A673 (cell line): ENCODE measurements at regions of chr1 and their contacts with region 1.

Region 1: GRCh38 chr1:16093596-16093995 is 20.1 kb upstream of the FAM131C start:
- DNase-seq: no peak
- H3K4me3 ChIP-seq: no peak overlapping the region
- H3K27ac ChIP-seq: no peak overlapping the region
- H3K4me1 ChIP-seq: peaks cover 9% of the 10 kb centered on the region
- H3K27me3 ChIP-seq: no peaks in the 10 kb centered on the region
- CTCF ChIP-seq: no peak

Region 2: GRCh38 chr1:15409388-15410222 is 684.0 kb before region 1 on chr1 and contains the start of gene EFHD2:
- CTCF ChIA-PET with region 1: no interaction called
- POLR2A ChIA-PET with region 1: no interaction called
- intact Hi-C with region 1: no loop called
- DNase-seq: peak; percentile 93
- H3K4me3 ChIP-seq: peak within 1 kb of the TSS; percentile 96
- H3K27ac ChIP-seq: peak within 1 kb of the TSS; percentile 78
- H3K4me1 ChIP-seq: peaks cover 13% of the 10 kb centered on the region
- H3K27me3 ChIP-seq: no peaks in the 10 kb centered on the region
- CTCF ChIP-seq: no peak
- total RNA-seq, gene EFHD2: 30.6 and 32.5 TPM in 2 replicates

Region 3: DNA sequence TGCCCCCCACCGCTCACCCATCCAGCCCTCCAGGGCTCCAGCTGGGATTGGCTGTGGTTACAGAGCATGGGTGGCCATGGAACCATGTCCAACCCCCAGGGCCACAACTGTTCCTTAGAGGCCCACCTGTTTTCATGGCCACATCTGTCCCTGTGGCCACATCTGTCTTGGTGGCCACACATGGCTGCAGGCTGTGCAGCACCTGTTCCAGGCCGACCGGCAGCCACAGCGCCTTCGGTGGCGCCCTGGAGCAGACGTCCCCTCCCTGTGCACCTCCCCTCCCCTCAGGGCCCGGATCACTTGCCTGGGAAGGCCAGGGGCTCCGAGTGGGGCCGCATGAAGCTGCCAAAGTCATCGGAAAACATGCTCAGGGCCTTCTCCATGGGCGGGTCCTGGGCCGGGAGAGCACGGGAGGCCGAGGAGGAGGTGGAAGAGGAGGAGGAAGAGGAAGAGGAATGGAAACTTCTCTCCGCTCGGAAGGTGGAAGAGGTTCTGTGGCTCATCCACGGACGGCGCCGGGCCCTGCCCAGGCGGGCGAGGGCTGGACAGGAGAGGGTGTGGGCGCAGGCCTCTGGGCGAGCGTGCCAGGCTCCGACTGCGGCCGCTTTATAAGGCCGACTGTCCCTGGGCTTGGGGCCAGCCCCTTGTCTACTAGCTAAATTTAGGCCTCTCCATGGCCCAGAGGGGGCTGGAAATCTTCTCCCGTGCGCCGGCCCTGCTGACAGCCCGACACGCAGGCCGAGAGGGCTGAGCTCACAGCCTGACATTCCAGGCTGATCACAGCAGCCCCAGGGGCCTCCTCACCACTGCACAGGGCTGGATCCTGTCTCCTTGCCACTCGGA is 75.9 kb before region 1 on chr1 and contains the start of gene HSPB7:
- CTCF ChIA-PET with region 1: no interaction called
- POLR2A ChIA-PET with region 1: no interaction called
- intact Hi-C with region 1: no loop called
- DNase-seq: no peak
- H3K4me3 ChIP-seq: no peak within 1 kb of the TSS
- H3K27ac ChIP-seq: no peak within 1 kb of the TSS
- H3K4me1 ChIP-seq: peaks cover 7% of the 10 kb centered on the region
- H3K27me3 ChIP-seq: no peaks in the 10 kb centered on the region
- CTCF ChIP-seq: no peak
- total RNA-seq, gene HSPB7: not detected in 2 replicates

Region 4: GRCh38 chr1:16155532-16156410 is 62.2 kb after region 1 on chr1 and contains the start of gene EPHA2:
- CTCF ChIA-PET with region 1: interaction called, 10 read pairs
- POLR2A ChIA-PET with region 1: no interaction called
- intact Hi-C with region 1: no loop called
- DNase-seq: peak; percentile 95
- H3K4me3 ChIP-seq: peak within 1 kb of the TSS; percentile 93
- H3K27ac ChIP-seq: peak within 1 kb of the TSS; percentile 95
- H3K4me1 ChIP-seq: peaks cover 44% of the 10 kb centered on the region
- H3K27me3 ChIP-seq: no peaks in the 10 kb centered on the region
- CTCF ChIP-seq: no peak
- total RNA-seq, gene EPHA2: 70.5 and 91.6 TPM in 2 replicates

Region 5: GRCh38 chr1:16187748-16188401 is 94.3 kb after region 1 on chr1:
- CTCF ChIA-PET with region 1: no interaction called
- POLR2A ChIA-PET with region 1: no interaction called
- intact Hi-C with region 1: no loop called
- DNase-seq: peak; percentile 83
- H3K4me3 ChIP-seq: no peak overlapping the region
- H3K27ac ChIP-seq: no peak overlapping the region
- H3K4me1 ChIP-seq: peaks cover 11% of the 10 kb centered on the region
- H3K27me3 ChIP-seq: no peaks in the 10 kb centered on the region
- CTCF ChIP-seq: peak; percentile 98